HEK293T (cell line): ENCODE measurements at regions of chr11 and their contacts with region 1.

Region 1: DNA sequence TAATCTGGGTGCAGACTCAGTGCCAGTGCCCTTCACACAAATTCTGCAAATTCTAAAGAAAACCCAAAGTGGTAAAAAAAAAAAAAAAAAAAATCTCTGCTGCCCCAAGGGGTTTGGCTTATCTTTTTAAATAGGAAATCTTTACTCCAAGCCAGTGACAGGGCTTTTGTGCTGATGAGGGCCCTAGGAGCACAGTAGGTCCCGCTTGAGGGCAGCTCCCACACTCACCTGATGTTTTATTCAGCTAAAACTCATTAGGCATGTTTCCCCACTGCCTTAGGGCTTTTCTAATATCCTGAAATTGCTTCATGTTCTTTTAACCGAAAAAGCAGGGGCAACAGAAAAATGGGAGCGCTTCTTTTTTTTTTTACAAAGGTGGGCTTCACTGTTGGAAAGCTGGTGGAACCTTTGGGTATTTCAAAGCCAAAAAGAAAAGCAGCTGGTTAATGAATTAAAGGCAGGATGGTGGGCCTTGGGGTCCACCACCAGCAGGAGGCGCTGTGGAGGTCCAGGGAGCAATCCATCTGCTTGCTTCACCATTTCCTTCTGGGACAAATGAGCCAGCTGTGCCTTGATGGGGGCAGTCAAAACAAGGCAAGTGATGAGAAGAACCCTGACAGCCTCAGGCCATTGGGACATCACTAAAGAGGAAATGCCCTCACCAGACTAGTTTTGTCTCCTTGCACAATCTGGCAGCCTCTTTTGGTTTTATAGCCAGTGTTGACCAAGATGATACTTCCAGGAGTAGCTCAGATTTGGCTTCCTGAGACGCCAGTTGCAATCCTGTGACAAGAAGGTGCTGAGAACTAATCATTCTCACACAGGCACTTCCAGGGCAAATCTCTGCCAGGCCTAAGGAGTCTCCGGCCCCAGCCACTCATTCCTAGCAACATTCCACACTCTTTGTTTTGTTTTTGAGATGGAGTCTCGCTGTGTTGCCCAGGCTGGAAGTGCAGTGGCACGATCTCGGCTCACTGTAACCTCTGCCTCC is 38.4 kb upstream of the WEE1 start:
- DNase-seq: peak; percentile 71

Region 2: DNA sequence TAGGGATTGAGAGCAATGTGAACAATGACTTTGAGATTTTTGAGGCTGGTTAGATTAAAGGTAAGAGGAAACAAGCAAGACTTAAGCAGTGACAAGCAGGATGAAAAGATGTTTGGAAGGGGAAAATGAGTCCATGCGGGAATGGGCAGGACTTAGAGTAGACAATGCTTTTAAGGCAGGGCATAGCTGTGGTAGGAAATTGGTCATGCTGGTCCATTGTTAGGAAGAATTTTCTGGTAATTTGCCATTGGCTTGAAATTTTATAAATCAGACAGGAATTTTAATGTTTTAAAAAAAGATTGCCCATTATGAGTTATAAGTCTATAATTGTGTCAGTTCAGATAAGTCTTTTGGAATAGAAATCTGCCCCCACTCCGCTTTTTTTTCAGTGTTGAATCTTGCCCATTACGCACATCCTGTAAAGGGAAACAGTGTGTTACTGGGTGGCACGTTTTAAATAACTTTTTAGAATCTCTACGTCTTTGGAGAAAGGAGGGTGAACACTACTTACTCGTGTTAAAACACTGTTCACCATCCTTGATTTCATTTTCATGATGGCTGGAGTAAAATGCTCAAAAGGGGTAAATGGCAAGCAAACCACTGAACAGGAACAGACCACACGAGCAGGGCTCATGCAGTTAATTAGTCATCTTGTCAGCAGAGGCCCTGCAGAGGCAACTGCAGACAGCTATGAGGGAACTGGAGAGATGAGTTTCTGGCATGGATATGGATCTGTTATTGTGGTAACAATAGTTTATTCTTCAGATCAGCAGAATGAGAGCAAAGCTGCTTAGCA is 153.8 kb after region 1 on chr11:
- CTCF ChIA-PET with region 1: interaction called, 10 read pairs
- POLR2A ChIA-PET with region 1: no interaction called
- DNase-seq: no peak